IMR-90 (cell line): ENCODE measurements at regions of chr7 and their contacts with region 1.

Region 1: DNA sequence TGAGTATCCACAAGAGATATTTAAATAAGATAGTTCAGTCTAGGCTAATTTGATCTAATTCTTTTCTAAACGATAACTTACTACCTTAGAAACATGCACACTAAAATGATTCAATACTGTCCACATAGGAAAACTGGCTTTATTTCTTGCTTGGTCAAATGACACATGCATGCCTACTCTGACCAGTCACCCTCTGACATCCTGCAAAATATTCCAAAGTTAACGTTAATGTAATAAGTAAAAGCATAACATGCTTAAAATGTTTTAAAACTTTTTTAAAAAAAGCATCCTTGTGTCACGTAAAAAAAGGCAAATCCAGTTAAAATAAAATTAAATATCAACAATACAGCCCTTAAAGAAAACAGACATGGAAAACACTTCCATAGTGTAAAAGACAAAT is 70.2 kb downstream of the UBE2H start:
- DNase-seq: peak; percentile 77
- ATAC-seq: peak; percentile 88
- H3K4me3 ChIP-seq: no peak overlapping the region
- H3K27ac ChIP-seq: no peak overlapping the region
- H3K4me1 ChIP-seq: peaks cover 4% of the 10 kb centered on the region
- H3K27me3 ChIP-seq: no peaks in the 10 kb centered on the region
- CTCF ChIP-seq: no peak
- POLR2A ChIP-seq: no peak
- RAD21 ChIP-seq: no peak

Region 2: DNA sequence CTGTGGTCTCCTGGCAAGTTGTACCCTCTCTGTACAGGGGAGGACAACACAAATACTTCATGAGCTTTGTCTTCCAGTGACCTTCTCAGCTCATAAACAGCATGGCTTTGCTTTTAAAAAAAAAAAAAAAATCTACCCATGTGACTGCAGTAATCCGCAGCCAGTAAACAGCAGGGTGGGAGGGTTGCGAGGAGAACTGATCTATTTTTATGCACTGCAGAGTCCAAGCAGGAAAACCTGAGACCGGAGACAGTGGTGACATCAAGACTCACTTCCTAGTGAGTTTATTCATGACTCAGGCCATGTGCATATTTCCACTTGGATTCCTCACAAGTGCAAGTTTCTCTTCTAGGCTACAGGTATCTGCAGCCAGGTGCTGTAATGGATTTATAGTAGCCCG is 143.1 kb before region 1 on chr7:
- CTCF ChIA-PET with region 1: no interaction called
- POLR2A ChIA-PET with region 1: no interaction called
- dilution Hi-C with region 1: no loop called
- in situ Hi-C with region 1: no loop called
- intact Hi-C with region 1: no loop called
- DNase-seq: peak; percentile 76
- ATAC-seq: peak; percentile 69
- H3K4me3 ChIP-seq: no peak overlapping the region
- H3K27ac ChIP-seq: no peak overlapping the region
- H3K4me1 ChIP-seq: peaks cover 1% of the 10 kb centered on the region; the same call in 1 of the 2 replicates
- H3K27me3 ChIP-seq: no peaks in the 10 kb centered on the region
- CTCF ChIP-seq: no peak
- POLR2A ChIP-seq: no peak
- RAD21 ChIP-seq: no peak

Region 3: GRCh38 chr7:129825496-129826267 is 56.8 kb before region 1 on chr7:
- CTCF ChIA-PET with region 1: no interaction called
- POLR2A ChIA-PET with region 1: no interaction called
- dilution Hi-C with region 1: no loop called
- in situ Hi-C with region 1: no loop called
- intact Hi-C with region 1: no loop called
- DNase-seq: peak; percentile 43
- ATAC-seq: peak; percentile 87
- H3K4me3 ChIP-seq: peak overlapping the region; percentile 96
- H3K27ac ChIP-seq: peak overlapping the region; percentile 71
- H3K4me1 ChIP-seq: peaks cover 10% of the 10 kb centered on the region
- H3K27me3 ChIP-seq: no peaks in the 10 kb centered on the region
- CTCF ChIP-seq: peak; percentile 57
- POLR2A ChIP-seq: no peak
- RAD21 ChIP-seq: peak; percentile 64

Region 4: GRCh38 chr7:129943352-129943751 is 60.8 kb after region 1 on chr7:
- CTCF ChIA-PET with region 1: interaction called, 15 read pairs
- POLR2A ChIA-PET with region 1: no interaction called
- dilution Hi-C with region 1: no loop called
- in situ Hi-C with region 1: no loop called
- intact Hi-C with region 1: no loop called
- DNase-seq: no peak
- ATAC-seq: no peak
- H3K4me3 ChIP-seq: no peak overlapping the region
- H3K27ac ChIP-seq: no peak overlapping the region
- H3K4me1 ChIP-seq: peaks cover 7% of the 10 kb centered on the region
- H3K27me3 ChIP-seq: no peaks in the 10 kb centered on the region
- CTCF ChIP-seq: no peak
- POLR2A ChIP-seq: no peak
- RAD21 ChIP-seq: no peak

Region 5: DNA sequence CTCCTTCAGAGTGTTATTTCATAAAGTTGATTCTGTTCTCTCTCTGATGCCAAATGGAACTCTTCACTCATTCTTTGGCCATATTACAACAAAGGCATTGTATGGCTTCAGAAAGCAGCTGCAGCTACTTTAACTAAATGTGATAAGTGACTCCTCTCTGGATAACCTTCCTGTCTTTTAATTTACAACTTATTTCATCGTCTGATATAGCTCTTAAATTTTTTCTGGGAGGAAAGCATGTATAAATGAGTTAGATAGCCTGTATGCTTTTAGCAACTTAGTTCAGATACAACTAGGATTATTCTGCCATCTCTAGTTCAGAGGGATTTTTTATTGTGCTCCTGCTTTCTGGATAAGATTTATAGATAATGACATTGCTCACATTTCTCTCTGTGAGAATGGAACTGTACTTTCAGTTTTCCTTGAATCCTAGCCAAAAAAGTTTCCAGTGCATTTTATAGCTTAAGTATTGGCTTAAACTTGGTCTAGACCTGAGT is 245.3 kb after region 1 on chr7:
- CTCF ChIA-PET with region 1: no interaction called
- POLR2A ChIA-PET with region 1: no interaction called
- dilution Hi-C with region 1: no loop called
- in situ Hi-C with region 1: no loop called
- intact Hi-C with region 1: no loop called
- DNase-seq: peak; percentile 44
- ATAC-seq: peak; percentile 37; the same call in 1 of the 2 replicates
- H3K4me3 ChIP-seq: no peak overlapping the region
- H3K27ac ChIP-seq: no peak overlapping the region
- H3K4me1 ChIP-seq: no peaks in the 10 kb centered on the region
- H3K27me3 ChIP-seq: no peaks in the 10 kb centered on the region
- CTCF ChIP-seq: no peak
- POLR2A ChIP-seq: no peak
- RAD21 ChIP-seq: no peak

Region 6: GRCh38 chr7:130305433-130306042 is 423.0 kb after region 1 on chr7:
- CTCF ChIA-PET with region 1: no interaction called
- POLR2A ChIA-PET with region 1: no interaction called
- dilution Hi-C with region 1: no loop called
- in situ Hi-C with region 1: no loop called
- intact Hi-C with region 1: no loop called
- DNase-seq: no peak
- ATAC-seq: no peak
- H3K4me3 ChIP-seq: no peak overlapping the region
- H3K27ac ChIP-seq: no peak overlapping the region
- H3K4me1 ChIP-seq: peaks cover 2% of the 10 kb centered on the region
- H3K27me3 ChIP-seq: no peaks in the 10 kb centered on the region
- CTCF ChIP-seq: no peak
- POLR2A ChIP-seq: no peak
- RAD21 ChIP-seq: no peak